A549 (cell line): ENCODE measurements at regions of chr17 and their contacts with region 1.

Region 1: DNA sequence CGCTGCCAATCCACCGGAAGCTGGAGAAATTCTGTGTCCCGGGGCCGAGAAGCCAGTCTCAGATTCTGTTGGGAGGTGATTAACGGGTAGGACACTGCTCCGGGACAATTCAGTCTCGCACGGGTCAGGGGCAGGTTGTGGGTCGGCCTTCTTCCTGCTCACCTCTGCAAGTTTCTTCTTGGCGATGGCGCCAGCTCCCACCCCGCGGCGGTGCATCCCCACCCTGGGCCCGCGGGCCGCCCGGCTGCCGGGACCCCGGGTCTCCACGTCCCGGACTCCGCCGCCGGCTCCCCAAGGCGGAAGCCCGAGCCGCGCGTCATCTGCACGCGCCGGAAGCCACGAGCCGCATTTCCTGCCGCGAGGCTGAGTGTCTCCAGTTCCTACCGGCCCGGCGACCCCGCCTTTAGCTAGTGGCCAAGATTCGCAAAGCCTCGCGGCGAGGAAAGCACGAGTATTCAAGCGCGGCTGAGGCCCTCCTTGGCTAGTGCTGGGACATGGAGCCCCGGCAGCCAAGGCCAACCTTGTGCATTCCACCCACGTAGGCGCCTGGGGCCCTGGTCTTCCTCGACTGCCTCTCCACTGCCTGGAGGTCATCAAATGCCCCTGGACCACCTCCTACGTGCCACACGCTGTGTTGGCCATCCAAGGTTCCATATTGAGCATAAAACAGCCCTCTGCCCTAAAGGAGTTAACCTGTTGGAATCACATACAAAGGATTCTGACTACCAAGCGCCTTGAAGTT is at the start of gene SNF8:
- DNase-seq: peak; percentile 95 to 99
- ATAC-seq: peak; percentile 95 to 98
- H3K4me3 ChIP-seq: peak within 1 kb of the TSS; percentile 60
- H3K27ac ChIP-seq: peak within 1 kb of the TSS; percentile 86 to 92
- H3K4me1 ChIP-seq: peaks cover 19% of the 10 kb centered on the region; the same call in 2 of the 3 replicates
- CTCF ChIP-seq: no peak
- EP300 ChIP-seq: no peak
- POLR2A ChIP-seq: peak; percentile 72
- RAD21 ChIP-seq: peak in 1 of 2 experiments; percentile 50; a peak in 4 of 5 replicates
- polyA plus RNA-seq, gene SNF8: 187 and 209 TPM in 2 replicates

Region 2: GRCh38 chr17:48892940-48893645 is 51.6 kb before region 1 on chr17:
- CTCF ChIA-PET with region 1: interaction called, 3 read pairs
- POLR2A ChIA-PET with region 1: interaction called, 11 read pairs
- DNase-seq: no peak
- ATAC-seq: no peak
- H3K4me3 ChIP-seq: peak overlapping the region; percentile 86
- H3K27ac ChIP-seq: peak overlapping the region; percentile 89 to 92
- H3K4me1 ChIP-seq: peaks cover 26% of the 10 kb centered on the region
- CTCF ChIP-seq: no peak
- EP300 ChIP-seq: no peak
- POLR2A ChIP-seq: no peak
- RAD21 ChIP-seq: no peak

Region 3: DNA sequence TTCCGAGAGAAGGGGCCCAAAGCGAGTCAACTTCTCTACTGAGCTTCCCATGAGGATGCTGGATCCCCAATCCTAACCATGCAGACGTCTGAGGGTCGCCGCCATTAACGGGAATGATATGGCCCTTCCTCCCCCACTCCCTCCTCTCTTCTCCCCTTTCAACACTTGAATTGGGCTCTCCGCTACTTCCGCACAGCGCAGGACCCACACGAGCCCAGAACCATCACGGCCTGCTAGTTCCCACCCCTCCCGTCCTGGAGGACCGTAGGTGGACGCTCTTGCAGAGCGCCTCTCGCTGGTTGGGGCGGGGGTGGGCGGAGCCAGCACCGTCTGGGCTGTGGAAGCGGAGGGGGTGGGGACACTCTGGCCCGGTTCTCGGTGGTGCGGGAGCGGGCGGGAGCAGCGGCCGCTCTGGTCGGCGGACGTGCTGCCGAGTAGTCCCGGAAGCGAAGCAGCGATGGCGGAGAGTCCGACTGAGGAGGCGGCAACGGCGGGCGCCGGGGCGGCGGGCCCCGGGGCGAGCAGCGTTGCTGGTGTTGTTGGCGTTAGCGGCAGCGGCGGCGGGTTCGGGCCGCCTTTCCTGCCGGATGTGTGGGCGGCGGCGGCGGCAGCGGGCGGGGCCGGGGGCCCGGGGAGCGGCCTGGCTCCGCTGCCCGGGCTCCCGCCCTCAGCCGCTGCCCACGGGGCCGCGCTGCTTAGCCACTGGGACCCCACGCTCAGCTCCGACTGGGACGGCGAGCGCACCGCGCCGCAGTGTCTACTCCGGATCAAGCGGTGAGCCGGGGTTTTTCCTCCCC is 36.4 kb before region 1 on chr17 and contains the start of gene UBE2Z:
- CTCF ChIA-PET with region 1: interaction called, 5 read pairs
- POLR2A ChIA-PET with region 1: interaction called, 13 read pairs
- DNase-seq: peak; percentile 99
- ATAC-seq: peak; percentile 92 to 93
- H3K4me3 ChIP-seq: peak within 1 kb of the TSS; percentile 89
- H3K27ac ChIP-seq: peak within 1 kb of the TSS; percentile 94 to 98
- H3K4me1 ChIP-seq: peaks cover 44% of the 10 kb centered on the region
- CTCF ChIP-seq: peak; percentile 31; the same call in 2 of the 3 replicates
- EP300 ChIP-seq: 0 out of 5 replicates have a peak, but pooled peaks of 1 of the 2 experiments have one; percentile 4
- POLR2A ChIP-seq: peak; percentile 97
- RAD21 ChIP-seq: no peak
- polyA plus RNA-seq, gene UBE2Z: 174 and 196 TPM in 2 replicates

Region 4: DNA sequence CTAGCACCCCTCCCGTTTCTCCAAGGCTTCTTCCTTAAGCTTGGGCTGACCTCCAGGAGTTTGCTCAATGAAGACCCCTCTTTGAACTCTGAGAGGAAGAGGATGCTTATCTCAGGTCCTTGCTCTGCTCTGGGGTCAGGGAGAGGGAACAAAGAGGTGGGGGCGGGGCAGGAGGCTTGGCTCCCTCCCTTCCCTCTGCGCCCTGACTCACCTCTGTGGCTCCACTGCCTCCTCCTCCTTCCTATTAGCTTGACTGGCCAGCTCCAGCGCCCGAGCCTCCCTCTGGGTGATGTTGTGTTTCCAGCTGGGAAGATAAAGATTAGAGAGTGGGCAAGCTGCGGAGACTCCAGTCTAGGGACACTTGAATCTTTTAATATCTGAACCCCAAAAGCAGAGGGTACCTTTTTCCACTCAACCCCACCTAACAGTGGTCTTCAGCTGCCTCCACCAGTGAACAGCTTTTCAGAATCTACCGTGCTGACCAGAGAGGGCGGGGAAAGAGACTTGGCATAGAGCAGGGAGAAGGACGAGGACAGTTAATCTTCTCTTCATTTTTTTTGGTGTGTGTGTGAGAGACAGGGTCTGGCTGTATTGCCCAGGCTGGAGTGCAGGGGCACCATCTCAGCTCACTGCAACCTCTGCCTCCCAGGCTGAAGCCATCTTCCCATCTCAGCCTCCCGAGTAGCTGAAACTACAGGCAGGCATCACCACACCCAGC is 17.0 kb after region 1 on chr17:
- CTCF ChIA-PET with region 1: interaction called, 3 read pairs
- POLR2A ChIA-PET with region 1: interaction called, 26 read pairs
- DNase-seq: peak; percentile 83 to 86
- ATAC-seq: peak; percentile 91 to 94
- H3K4me3 ChIP-seq: peak overlapping the region; percentile 30
- H3K27ac ChIP-seq: peak overlapping the region; percentile 94 to 97
- H3K4me1 ChIP-seq: peaks cover 53% of the 10 kb centered on the region
- CTCF ChIP-seq: no peak
- EP300 ChIP-seq: no peak
- POLR2A ChIP-seq: no peak; the same call in none of the 2 replicates
- RAD21 ChIP-seq: peak in 1 of 2 experiments; percentile 15; a peak in 2 of 5 replicates

Region 5: GRCh38 chr17:48970224-48970623 is 25.5 kb after region 1 on chr17:
- CTCF ChIA-PET with region 1: interaction called, 3 read pairs
- POLR2A ChIA-PET with region 1: interaction called, 20 read pairs
- DNase-seq: peak in 1 of 2 experiments; percentile 61
- ATAC-seq: peak; percentile 2; a peak in 2 of 6 replicates
- H3K4me3 ChIP-seq: no peak overlapping the region
- H3K27ac ChIP-seq: peak overlapping the region; percentile 95 to 98
- H3K4me1 ChIP-seq: peaks cover 51% of the 10 kb centered on the region
- CTCF ChIP-seq: no peak
- EP300 ChIP-seq: no peak
- POLR2A ChIP-seq: no peak
- RAD21 ChIP-seq: no peak

Region 6: GRCh38 chr17:48997083-48997826 is 52.6 kb after region 1 on chr17 and contains the start of gene IGF2BP1:
- CTCF ChIA-PET with region 1: interaction called, 256 read pairs
- POLR2A ChIA-PET with region 1: interaction called, 44 read pairs
- DNase-seq: peak; percentile 88 to 95
- ATAC-seq: peak; percentile 49 to 58
- H3K4me3 ChIP-seq: peak within 1 kb of the TSS; percentile 60
- H3K27ac ChIP-seq: peak within 1 kb of the TSS; percentile 93 to 97
- H3K4me1 ChIP-seq: peaks cover 40% of the 10 kb centered on the region
- CTCF ChIP-seq: no peak
- EP300 ChIP-seq: no peak
- POLR2A ChIP-seq: peak; percentile 4; the same call in 1 of the 2 replicates
- RAD21 ChIP-seq: peak in 1 of 2 experiments; percentile 14; a peak in 1 of 5 replicates
- polyA plus RNA-seq, gene IGF2BP1: 26.2 and 30.1 TPM in 2 replicates

Region 7: DNA sequence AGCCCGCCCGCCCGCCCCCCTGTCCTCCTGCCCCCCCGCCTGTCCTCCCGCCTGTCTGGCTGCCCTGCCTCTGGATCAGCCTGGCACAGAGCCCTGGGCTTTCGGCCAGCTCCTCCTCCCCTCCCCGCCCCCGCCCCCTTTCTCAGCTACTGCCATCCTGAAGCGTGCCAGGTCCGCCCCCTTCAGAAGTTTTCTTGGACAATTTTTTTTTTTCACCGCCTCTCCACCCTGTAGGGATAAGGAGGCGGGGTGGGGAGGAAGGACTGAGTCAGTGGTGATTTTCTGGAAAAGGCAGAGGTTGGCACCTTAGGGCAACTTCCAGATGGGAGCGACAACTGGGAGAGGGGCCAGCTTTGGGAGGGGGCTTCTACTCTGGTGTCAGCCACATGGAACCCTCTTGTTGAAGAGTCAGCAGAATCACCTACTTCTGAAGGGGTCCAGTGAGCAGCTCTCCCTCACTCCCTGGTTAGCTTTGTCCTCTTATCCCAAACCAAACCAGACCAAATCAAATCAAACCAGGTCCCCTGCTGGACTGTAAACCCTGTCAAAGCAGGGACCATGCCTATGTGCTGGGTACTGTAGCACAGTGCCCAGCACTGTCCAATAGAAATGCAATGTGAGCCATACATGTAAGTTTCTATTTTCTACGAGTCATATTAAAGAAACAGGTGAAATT is 72.2 kb after region 1 on chr17:
- CTCF ChIA-PET with region 1: interaction called, 8 read pairs
- POLR2A ChIA-PET with region 1: interaction called, 10 read pairs
- DNase-seq: peak; percentile 91 to 95
- ATAC-seq: peak; percentile 64 to 74
- H3K4me3 ChIP-seq: no peak overlapping the region
- H3K27ac ChIP-seq: peak overlapping the region; percentile 60 to 77; a peak in 5 of 6 replicates
- H3K4me1 ChIP-seq: peaks cover 100% of the 10 kb centered on the region
- CTCF ChIP-seq: no peak
- EP300 ChIP-seq: no peak
- POLR2A ChIP-seq: no peak
- RAD21 ChIP-seq: peak; percentile 16 to 42; a peak in 3 of 5 replicates

Region 8: GRCh38 chr17:49053171-49053829 is 108.6 kb after region 1 on chr17:
- CTCF ChIA-PET with region 1: no interaction called
- POLR2A ChIA-PET with region 1: no interaction called
- DNase-seq: no peak
- ATAC-seq: peak; percentile 21 to 50; a peak in 4 of 6 replicates
- H3K4me3 ChIP-seq: no peak overlapping the region
- H3K27ac ChIP-seq: peak overlapping the region in 1 of 2 experiments; percentile 25; a peak in 1 of 6 replicates
- H3K4me1 ChIP-seq: no peaks in the 10 kb centered on the region
- CTCF ChIP-seq: no peak
- EP300 ChIP-seq: no peak
- POLR2A ChIP-seq: no peak
- RAD21 ChIP-seq: no peak

Region 9: GRCh38 chr17:49201481-49201927 is 256.8 kb after region 1 on chr17:
- CTCF ChIA-PET with region 1: no interaction called
- POLR2A ChIA-PET with region 1: no interaction called
- DNase-seq: no peak
- ATAC-seq: no peak
- H3K4me3 ChIP-seq: no peak overlapping the region
- H3K27ac ChIP-seq: no peak overlapping the region
- H3K4me1 ChIP-seq: peaks cover 15% of the 10 kb centered on the region
- CTCF ChIP-seq: no peak
- EP300 ChIP-seq: no peak
- POLR2A ChIP-seq: no peak
- RAD21 ChIP-seq: no peak